Breast epithelium (tissue), 4 donors: ENCODE measurements at regions of chr20 and their contacts with region 1.

Region 1: GRCh38 chr20:32411955-32412706 is 54.0 kb downstream of the ASXL1 start:
- DNase-seq: no peak
- H3K4me3 ChIP-seq: no peak overlapping the region
- H3K27ac ChIP-seq: no peak overlapping the region
- H3K4me1 ChIP-seq: no peaks in the 10 kb centered on the region
- H3K27me3 ChIP-seq: no peaks in the 10 kb centered on the region
- CTCF ChIP-seq: no peak
- POLR2A ChIP-seq: no peak

Region 2: GRCh38 chr20:32454164-32455145 is 42.3 kb after region 1 on chr20:
- intact Hi-C with region 1: loop called (anchors 1 kb)
- DNase-seq: no peak
- H3K4me3 ChIP-seq: no peak overlapping the region
- H3K27ac ChIP-seq: peak overlapping the region; percentile 51 to 64
- H3K4me1 ChIP-seq: peaks cover 7% of the 10 kb centered on the region in 2 donors
- H3K27me3 ChIP-seq: no peaks in the 10 kb centered on the region
- CTCF ChIP-seq: no peak
- POLR2A ChIP-seq: no peak